ENCODE measurements at regions of chrX and their contacts with region 1.

Region 1: GRCh38 chrX:153667956-153668396 is 5.6 kb downstream of the PNCK start:
- DNase-seq: peak in 1 of 2 experiments; percentile 92
- H3K4me3 ChIP-seq: peak overlapping the region in 1 of 4 experiments; percentile 48; a peak in 2 of 8 replicates
- H3K27ac ChIP-seq: no peak overlapping the region
- H3K4me1 ChIP-seq: peaks cover 0 to 4% (median 0%) of the 10 kb centered on the region in 4 experiments; a peak in 2 of 7 replicates
- H3K27me3 ChIP-seq: peaks cover 0 to 2% (median 0%) of the 10 kb centered on the region in 4 experiments; a peak in 1 of 7 replicates
- CTCF ChIP-seq: peak in 2 of 3 experiments; percentile 73 to 85; a peak in 3 of 4 replicates
- EP300 ChIP-seq: no peak
- POLR2A ChIP-seq: no peak
- RAD21 ChIP-seq: peak; percentile 70 to 76

Region 2: DNA sequence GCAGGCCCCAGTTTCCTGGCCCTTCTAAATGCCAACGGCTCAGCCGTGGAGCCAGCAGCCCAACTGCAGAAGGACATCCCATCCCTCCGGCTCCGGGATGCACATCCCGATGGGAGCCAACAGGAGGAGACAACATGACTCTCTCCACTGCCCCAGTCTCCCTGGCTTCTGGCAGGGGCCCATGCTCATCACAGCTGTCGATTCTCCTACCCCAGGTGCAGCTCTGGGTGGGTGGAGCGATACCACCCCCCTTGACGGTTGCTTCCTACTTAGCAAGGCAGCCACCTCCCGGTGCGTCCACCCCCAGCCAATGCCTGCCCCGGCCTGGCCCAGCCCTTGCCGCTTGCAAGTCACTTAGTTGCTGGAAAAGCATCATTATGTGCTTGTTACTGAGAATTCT is 314.6 kb before region 1 on chrX:
- CTCF ChIA-PET with region 1: no interaction called
- POLR2A ChIA-PET with region 1: no interaction called
- DNase-seq: no peak
- H3K4me3 ChIP-seq: no peak overlapping the region
- H3K27ac ChIP-seq: no peak overlapping the region
- H3K4me1 ChIP-seq: peaks cover 0 to 2% (median 0%) of the 10 kb centered on the region in 4 experiments; a peak in 1 of 7 replicates
- H3K27me3 ChIP-seq: no peaks in the 10 kb centered on the region
- CTCF ChIP-seq: peak in 1 of 3 experiments; percentile 30; a peak in 1 of 4 replicates
- EP300 ChIP-seq: no peak
- POLR2A ChIP-seq: no peak
- RAD21 ChIP-seq: peak in 1 of 2 experiments; percentile 38; a peak in 2 of 4 replicates

Region 3: DNA sequence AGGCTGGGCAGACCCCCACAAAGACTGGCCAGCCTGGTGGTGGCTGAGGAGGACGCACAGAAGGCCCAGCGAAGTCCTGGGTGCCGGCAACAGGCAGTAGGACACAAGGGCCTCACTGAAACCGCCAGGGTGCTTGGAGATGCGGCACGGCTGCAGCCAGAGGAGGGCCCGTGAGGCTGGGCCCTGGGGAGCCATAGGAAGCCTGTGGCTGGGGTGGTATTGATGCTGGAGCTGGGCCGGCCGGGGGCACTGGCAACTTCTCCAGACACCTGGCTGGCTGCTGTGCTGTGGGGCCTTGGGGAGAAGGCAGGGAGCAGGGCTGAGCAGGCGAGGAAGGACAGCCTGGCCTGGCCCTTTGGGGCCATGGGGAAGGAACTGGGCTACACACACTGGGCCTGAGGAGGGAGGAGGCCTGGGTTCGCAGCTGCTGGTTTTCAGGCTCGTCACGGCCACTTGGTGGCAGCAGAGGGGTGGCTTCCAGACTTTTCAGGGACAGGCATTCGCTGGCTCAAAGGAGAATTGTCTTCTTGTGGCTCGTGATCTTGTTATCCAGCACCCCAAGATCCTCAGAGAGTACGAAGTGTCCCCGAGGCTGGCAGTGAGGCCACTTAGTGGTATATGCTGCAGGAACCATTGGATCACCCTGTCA is 113.3 kb before region 1 on chrX:
- CTCF ChIA-PET with region 1: interaction called, 26 read pairs
- POLR2A ChIA-PET with region 1: no interaction called
- DNase-seq: peak in 1 of 2 experiments; percentile 69
- H3K4me3 ChIP-seq: no peak overlapping the region
- H3K27ac ChIP-seq: no peak overlapping the region
- H3K4me1 ChIP-seq: no peaks in the 10 kb centered on the region
- H3K27me3 ChIP-seq: no peaks in the 10 kb centered on the region; a peak in 1 of 7 replicates
- CTCF ChIP-seq: peak in 2 of 3 experiments; percentile 74 to 76; a peak in 3 of 4 replicates
- EP300 ChIP-seq: no peak
- POLR2A ChIP-seq: no peak
- RAD21 ChIP-seq: peak; percentile 63 to 76

Region 4: GRCh38 chrX:153580700-153581386 is 87.1 kb before region 1 on chrX:
- CTCF ChIA-PET with region 1: interaction called, 17 read pairs
- POLR2A ChIA-PET with region 1: interaction called, 3 read pairs
- DNase-seq: peak in 1 of 2 experiments; percentile 76
- H3K4me3 ChIP-seq: no peak overlapping the region
- H3K27ac ChIP-seq: no peak overlapping the region
- H3K4me1 ChIP-seq: peaks cover 0 to 11% (median 1%) of the 10 kb centered on the region in 4 experiments; a peak in 3 of 7 replicates
- H3K27me3 ChIP-seq: no peaks in the 10 kb centered on the region
- CTCF ChIP-seq: peak in 2 of 3 experiments; percentile 44 to 65; a peak in 3 of 4 replicates
- EP300 ChIP-seq: no peak
- POLR2A ChIP-seq: no peak
- RAD21 ChIP-seq: peak; percentile 34 to 53

Region 5: DNA sequence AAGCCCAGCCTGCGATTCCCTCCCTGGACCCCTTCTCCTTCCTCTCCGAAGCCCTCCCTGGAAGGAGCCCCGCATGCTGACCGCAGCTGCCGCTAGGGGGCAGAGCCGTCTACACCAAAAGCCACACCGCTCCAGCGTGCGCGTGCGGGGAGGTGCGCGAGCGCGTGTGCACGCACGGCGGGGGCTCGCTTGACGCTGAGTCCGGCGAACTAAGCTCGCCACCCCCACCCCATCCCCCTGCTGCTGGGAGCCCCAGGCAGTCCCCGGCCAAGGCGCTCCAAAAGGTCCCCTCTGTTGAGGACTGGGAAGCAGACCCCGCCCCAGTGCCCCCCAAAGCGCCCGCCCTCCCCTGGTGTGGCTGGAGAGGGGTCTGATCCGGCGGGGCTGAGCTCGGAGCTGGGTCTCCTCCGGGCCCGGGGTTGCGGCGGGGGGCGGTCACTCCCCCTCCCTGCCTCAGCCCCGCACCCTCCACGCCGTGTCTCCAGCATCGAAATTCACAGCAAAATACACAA is 58.0 kb before region 1 on chrX:
- CTCF ChIA-PET with region 1: interaction called, 40 read pairs
- POLR2A ChIA-PET with region 1: no interaction called
- DNase-seq: peak in 1 of 2 experiments; percentile 89
- H3K4me3 ChIP-seq: peak overlapping the region in 2 of 4 experiments; percentile 33 to 51; a peak in 4 of 8 replicates
- H3K27ac ChIP-seq: no peak overlapping the region
- H3K4me1 ChIP-seq: no peaks in the 10 kb centered on the region
- H3K27me3 ChIP-seq: peaks cover 0 to 11% (median 8%) of the 10 kb centered on the region in 4 experiments; a peak in 6 of 7 replicates
- CTCF ChIP-seq: peak in 2 of 3 experiments; percentile 83 to 87; a peak in 3 of 4 replicates
- EP300 ChIP-seq: no peak
- POLR2A ChIP-seq: no peak
- RAD21 ChIP-seq: peak; percentile 66 to 76

Region 6: GRCh38 chrX:153657161-153657560 is 10.8 kb before region 1 on chrX:
- CTCF ChIA-PET with region 1: interaction called, 408 read pairs
- POLR2A ChIA-PET with region 1: no interaction called
- DNase-seq: no peak
- H3K4me3 ChIP-seq: no peak overlapping the region
- H3K27ac ChIP-seq: no peak overlapping the region
- H3K4me1 ChIP-seq: no peaks in the 10 kb centered on the region
- H3K27me3 ChIP-seq: no peaks in the 10 kb centered on the region
- CTCF ChIP-seq: no peak
- EP300 ChIP-seq: no peak
- POLR2A ChIP-seq: no peak
- RAD21 ChIP-seq: no peak

Region 7: DNA sequence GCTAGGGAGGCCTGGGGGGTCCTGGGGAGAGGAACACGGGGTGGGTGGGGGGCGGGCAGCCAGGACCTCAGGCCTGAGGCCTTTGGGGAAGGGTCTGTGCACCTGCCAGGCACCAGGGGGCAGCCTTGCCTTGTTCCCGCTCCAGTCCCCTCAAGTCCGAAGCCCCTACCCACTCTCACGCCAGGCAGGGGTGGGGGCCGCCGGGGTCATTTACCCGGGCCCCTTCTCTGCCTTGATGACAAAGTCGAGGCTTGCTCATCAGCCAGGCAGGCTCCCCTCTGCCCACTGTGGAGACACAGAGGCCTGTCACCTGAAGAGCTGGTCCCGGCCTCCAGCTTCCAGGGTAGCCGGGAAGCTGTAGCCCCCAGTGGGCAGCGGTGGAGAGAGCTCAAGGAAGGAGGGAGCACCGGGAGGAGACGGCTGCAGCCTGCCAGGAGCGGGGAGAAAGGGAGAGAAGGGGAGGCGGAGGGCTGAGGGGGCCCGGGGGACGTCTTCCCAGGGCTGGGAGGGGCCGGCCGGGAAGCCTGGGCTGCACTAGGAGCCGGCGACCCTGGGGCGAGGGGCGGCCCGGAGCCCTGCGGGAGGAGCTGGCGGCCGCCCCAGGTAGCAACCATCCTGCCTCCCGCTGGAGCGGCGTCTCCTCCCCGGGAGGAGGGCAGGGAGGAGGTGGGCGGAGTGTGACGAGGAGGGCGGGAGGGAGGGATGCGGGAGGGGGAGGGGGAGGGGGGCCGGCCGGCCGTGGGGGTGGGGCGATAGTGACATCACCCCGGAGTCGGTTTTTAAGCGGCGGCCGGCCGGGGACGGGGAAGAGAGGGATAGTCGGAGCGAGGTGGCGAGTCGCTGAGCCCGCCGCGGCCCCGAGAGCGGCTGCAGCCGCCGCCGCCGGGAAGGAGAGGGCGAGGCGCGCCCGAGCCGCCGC is 19.4 kb after region 1 on chrX and contains the start of gene SLC6A8:
- CTCF ChIA-PET with region 1: interaction called, 24 read pairs
- POLR2A ChIA-PET with region 1: interaction called, 4 read pairs
- DNase-seq: peak in 1 of 2 experiments; percentile 69
- H3K4me3 ChIP-seq: peak within 1 kb of the TSS; percentile 47 to 58 (median 51)
- H3K27ac ChIP-seq: no peak within 1 kb of the TSS
- H3K4me1 ChIP-seq: peaks cover 0 to 27% (median 11%) of the 10 kb centered on the region in 4 experiments; a peak in 6 of 7 replicates
- H3K27me3 ChIP-seq: no peaks in the 10 kb centered on the region
- CTCF ChIP-seq: peak in 2 of 3 experiments; percentile 30 to 33; a peak in 3 of 4 replicates
- EP300 ChIP-seq: no peak
- POLR2A ChIP-seq: no peak; a peak in 1 of 3 replicates
- RAD21 ChIP-seq: peak; percentile 19 to 44; a peak in 3 of 4 replicates
- total RNA-seq, gene SLC6A8: 94.7 and 98.5 TPM in 2 replicates

Region 8: GRCh38 chrX:153818571-153819383 is 150.8 kb after region 1 on chrX:
- CTCF ChIA-PET with region 1: no interaction called
- POLR2A ChIA-PET with region 1: no interaction called
- DNase-seq: peak in 1 of 2 experiments; percentile 75
- H3K4me3 ChIP-seq: peak overlapping the region; percentile 27 to 57 (median 39)
- H3K27ac ChIP-seq: peak overlapping the region; percentile 63; the same call in 1 of the 2 replicates
- H3K4me1 ChIP-seq: peaks cover 0 to 21% (median 6%) of the 10 kb centered on the region in 4 experiments; a peak in 6 of 7 replicates
- H3K27me3 ChIP-seq: no peaks in the 10 kb centered on the region
- CTCF ChIP-seq: no peak
- EP300 ChIP-seq: 0 out of 3 replicates have a peak, but pooled peaks of 1 of the 2 experiments have one; percentile 14
- POLR2A ChIP-seq: peak in 1 of 2 experiments; percentile 64; a peak in 2 of 3 replicates
- RAD21 ChIP-seq: no peak

Region 9: GRCh38 chrX:154136627-154137161 is 468.7 kb after region 1 on chrX:
- CTCF ChIA-PET with region 1: no interaction called
- POLR2A ChIA-PET with region 1: no interaction called
- DNase-seq: peak; percentile 33 to 85
- H3K4me3 ChIP-seq: peak overlapping the region in 3 of 4 experiments; percentile 11 to 54 (median 11); a peak in 4 of 8 replicates
- H3K27ac ChIP-seq: no peak overlapping the region
- H3K4me1 ChIP-seq: no peaks in the 10 kb centered on the region
- H3K27me3 ChIP-seq: peaks cover 0 to 1% (median 0%) of the 10 kb centered on the region in 4 experiments; a peak in 1 of 7 replicates
- CTCF ChIP-seq: peak; percentile 51 to 92 (median 63)
- EP300 ChIP-seq: no peak
- POLR2A ChIP-seq: no peak
- RAD21 ChIP-seq: peak; percentile 55 to 74; a peak in 3 of 4 replicates

Measured in H1 (cell line).